ENCODE measurements at regions of chr11 and their contacts with region 1.

Region 1: DNA sequence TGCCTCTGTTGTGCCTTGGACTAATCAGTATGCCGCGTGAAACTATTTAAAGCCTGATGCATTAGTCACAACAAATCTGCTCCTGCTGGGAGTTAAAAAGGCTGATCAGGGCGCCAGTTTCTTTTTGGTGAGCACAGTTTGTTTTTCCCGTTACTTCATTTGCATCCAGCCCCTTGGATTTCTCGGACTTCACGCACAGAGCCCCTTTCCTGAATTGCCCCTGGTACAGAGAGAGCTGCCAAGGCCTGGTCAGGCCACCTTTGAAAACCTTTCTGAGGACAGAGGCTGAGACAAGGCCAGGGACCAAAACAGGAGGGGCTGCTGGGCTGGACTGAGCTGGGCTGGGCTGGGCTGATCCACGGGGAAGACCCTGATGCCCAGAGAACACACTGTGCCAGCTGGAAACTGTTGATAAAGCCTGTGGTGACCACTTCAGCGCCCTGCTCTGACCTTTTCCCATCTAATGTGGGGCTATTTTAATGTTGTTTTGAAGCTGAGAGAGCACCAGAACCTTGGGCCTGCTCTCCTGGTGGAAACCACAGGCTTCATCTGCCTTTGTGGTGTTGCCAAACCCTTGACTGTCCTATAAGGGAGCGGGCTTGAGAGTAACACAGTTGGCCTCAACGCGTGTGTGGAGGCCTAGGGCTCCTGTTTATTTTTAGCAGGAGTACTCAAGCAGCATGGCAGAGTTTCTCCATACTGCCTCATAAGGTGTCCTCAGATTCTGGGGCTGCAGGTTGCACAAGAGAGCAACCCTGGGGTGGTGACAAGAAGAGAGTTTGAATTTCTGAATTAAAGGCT is 44.2 kb downstream of the NAV2 start:
- DNase-seq: peak; percentile 48
- H3K4me3 ChIP-seq: peak overlapping the region; percentile 14
- H3K27ac ChIP-seq: peak overlapping the region; percentile 83
- H3K4me1 ChIP-seq: peaks cover 32% of the 10 kb centered on the region
- H3K27me3 ChIP-seq: no peaks in the 10 kb centered on the region
- CTCF ChIP-seq: no peak

Region 2: GRCh38 chr11:19800162-19800561 is 43.3 kb after region 1 on chr11:
- intact Hi-C with region 1: loop called (anchors 10 kb)
- DNase-seq: no peak
- H3K4me3 ChIP-seq: no peak overlapping the region
- H3K27ac ChIP-seq: no peak overlapping the region
- H3K4me1 ChIP-seq: peaks cover 59% of the 10 kb centered on the region
- H3K27me3 ChIP-seq: no peaks in the 10 kb centered on the region
- CTCF ChIP-seq: peak; percentile 41

Region 3: DNA sequence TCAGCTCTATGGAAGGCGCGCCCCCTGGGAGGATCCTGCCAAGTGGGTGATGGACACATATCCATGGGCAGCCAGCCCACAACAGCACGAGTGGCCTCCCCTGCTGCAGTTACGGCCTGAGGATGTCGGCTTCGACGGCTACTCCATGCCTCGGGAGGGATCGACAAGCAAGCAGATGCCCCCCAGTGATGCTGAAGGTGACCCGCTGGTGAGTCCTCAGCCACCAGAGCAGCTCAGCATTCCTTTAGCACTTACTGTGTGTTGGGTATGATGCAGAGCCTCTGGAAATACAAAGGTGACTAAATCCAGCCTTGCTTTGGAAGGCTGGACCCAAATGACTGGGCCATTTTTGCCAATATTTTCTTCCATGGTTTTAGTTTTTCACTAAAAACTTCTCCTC is 357.7 kb after region 1 on chr11:
- intact Hi-C with region 1: no loop called
- DNase-seq: no peak
- H3K4me3 ChIP-seq: no peak overlapping the region
- H3K27ac ChIP-seq: no peak overlapping the region
- H3K4me1 ChIP-seq: peaks cover 24% of the 10 kb centered on the region
- H3K27me3 ChIP-seq: no peaks in the 10 kb centered on the region
- CTCF ChIP-seq: no peak

Region 4: DNA sequence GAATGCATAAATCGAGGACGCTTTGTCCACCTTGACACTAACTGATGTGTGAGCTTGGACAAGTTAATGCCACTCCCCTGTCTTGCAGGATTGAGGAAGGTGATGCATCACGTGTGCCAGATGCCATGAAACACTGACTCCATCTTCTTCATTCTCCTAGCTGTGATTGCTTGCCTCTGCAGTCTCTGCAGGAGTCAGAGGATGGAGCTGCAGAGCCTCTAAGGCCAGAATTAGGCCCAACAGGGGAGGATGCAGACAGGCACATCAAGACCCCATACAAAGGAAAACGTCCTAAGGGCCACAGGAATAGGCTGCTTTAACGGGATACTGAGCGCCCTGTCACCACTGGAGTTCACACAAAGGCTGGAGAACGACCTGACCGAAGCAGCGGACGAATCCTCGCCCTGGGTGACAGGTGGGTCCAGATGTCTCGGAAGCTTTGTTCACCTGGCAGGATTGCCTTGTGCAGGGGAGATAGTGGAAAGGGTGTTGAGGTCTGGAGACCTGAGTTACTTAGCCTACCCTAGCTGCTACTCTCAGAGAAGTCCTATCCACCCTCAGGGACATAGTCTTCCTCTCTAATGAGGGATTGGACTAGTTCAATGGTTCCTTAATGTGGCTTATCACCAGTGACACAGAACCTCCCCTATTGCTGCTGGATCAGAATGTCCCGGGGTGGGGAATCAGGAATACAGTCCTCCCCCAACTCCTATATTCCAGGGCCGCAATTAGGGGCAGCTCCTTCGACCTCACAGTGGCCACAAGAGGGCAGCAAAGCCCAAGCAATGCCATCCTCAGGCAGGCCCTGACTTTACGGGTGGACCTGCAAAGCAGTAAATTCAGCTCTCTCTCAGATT is 371.0 kb after region 1 on chr11:
- intact Hi-C with region 1: no loop called
- DNase-seq: peak; percentile 64
- H3K4me3 ChIP-seq: no peak overlapping the region
- H3K27ac ChIP-seq: no peak overlapping the region
- H3K4me1 ChIP-seq: peaks cover 12% of the 10 kb centered on the region
- H3K27me3 ChIP-seq: peaks cover 4% of the 10 kb centered on the region
- CTCF ChIP-seq: peak; percentile 85

Measured in left ventricle myocardium inferior (tissue), 1 donor.